ENCODE measurements at regions of chr7 and their contacts with region 1.

Region 1: GRCh38 chr7:39525926-39526325 is 40.3 kb upstream of the YAE1 start:
- DNase-seq: no peak
- H3K4me3 ChIP-seq: no peak overlapping the region
- H3K4me3 Mint-ChIP-seq: no peak overlapping the region
- H3K27ac ChIP-seq: no peak overlapping the region
- H3K27ac Mint-ChIP-seq: no peak overlapping the region
- H3K4me1 ChIP-seq: no peaks in the 10 kb centered on the region
- H3K4me1 Mint-ChIP-seq: no peaks in the 10 kb centered on the region
- H3K27me3 ChIP-seq: no peaks in the 10 kb centered on the region
- H3K27me3 Mint-ChIP-seq: peaks cover 16 to 36% of the 10 kb centered on the region in 2 donors

Region 2: GRCh38 chr7:38796626-38797501 is 729.1 kb before region 1 on chr7:
- CTCF ChIA-PET with region 1: interaction called, 20 read pairs
- POLR2A ChIA-PET with region 1: no interaction called
- DNase-seq: peak; percentile 10 to 57 (median 17)
- H3K4me3 ChIP-seq: no peak overlapping the region
- H3K4me3 Mint-ChIP-seq: no peak overlapping the region
- H3K27ac ChIP-seq: no peak overlapping the region
- H3K27ac Mint-ChIP-seq: no peak overlapping the region
- H3K4me1 ChIP-seq: no peaks in the 10 kb centered on the region
- H3K4me1 Mint-ChIP-seq: no peaks in the 10 kb centered on the region
- H3K27me3 ChIP-seq: no peaks in the 10 kb centered on the region
- H3K27me3 Mint-ChIP-seq: no peaks in the 10 kb centered on the region

Region 3: DNA sequence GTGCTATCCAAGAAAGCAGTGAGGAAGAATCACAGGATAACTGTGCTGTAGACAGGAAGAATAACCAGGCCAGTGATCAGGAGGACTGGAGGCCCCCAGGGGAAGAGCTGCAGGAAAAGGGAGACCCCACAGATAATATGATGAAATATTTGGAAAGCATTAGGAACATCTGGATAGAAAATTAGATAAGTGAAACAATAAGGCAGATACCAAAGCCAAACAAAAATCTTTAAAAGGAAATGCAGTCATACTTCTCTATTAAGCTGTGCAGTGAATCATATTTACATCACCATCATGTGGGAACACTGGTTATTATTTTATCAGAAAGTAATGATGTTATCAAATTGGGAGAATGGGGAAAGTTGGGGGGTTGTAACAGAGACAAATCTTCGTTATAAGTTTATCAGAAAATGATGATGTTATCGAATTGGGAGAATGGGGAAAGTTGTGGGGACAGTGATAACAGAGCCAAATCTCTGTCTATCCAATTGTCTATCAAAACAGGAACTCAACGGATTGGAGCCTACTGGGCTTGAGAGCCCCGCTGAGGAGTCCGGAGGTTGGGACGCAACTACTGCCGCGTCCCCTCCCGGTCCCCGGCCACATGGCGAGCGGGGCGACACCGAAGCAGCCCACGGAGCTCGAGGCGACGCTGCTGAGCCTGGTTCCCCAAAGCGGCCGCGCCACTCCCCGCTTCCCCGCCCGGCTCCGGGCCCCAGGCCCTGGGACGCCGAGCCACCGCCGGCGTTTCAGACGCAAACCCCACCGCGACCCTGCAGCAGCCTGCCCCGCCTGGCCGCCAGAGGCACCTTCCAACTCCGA is 83.4 kb after region 1 on chr7:
- CTCF ChIA-PET with region 1: no interaction called
- POLR2A ChIA-PET with region 1: no interaction called
- DNase-seq: peak in 1 of 5 donors; percentile 24
- H3K4me3 ChIP-seq: peak overlapping the region; percentile 24
- H3K4me3 Mint-ChIP-seq: peak overlapping the region in 3 of 7 donors; percentile 20 to 42 (median 41)
- H3K27ac ChIP-seq: no peak overlapping the region
- H3K27ac Mint-ChIP-seq: peak overlapping the region in 2 of 8 donors; percentile 1 to 23
- H3K4me1 ChIP-seq: peaks cover 23% of the 10 kb centered on the region
- H3K4me1 Mint-ChIP-seq: peaks cover 11 to 36% (median 25%) of the 10 kb centered on the region in 3 donors
- H3K27me3 ChIP-seq: no peaks in the 10 kb centered on the region
- H3K27me3 Mint-ChIP-seq: peaks cover 30 to 56% of the 10 kb centered on the region in 2 donors

Measured in CD8-positive, alpha-beta memory T cell (primary cell).